ENCODE measurements at regions of chr22 and their contacts with region 1.

Region 1: DNA sequence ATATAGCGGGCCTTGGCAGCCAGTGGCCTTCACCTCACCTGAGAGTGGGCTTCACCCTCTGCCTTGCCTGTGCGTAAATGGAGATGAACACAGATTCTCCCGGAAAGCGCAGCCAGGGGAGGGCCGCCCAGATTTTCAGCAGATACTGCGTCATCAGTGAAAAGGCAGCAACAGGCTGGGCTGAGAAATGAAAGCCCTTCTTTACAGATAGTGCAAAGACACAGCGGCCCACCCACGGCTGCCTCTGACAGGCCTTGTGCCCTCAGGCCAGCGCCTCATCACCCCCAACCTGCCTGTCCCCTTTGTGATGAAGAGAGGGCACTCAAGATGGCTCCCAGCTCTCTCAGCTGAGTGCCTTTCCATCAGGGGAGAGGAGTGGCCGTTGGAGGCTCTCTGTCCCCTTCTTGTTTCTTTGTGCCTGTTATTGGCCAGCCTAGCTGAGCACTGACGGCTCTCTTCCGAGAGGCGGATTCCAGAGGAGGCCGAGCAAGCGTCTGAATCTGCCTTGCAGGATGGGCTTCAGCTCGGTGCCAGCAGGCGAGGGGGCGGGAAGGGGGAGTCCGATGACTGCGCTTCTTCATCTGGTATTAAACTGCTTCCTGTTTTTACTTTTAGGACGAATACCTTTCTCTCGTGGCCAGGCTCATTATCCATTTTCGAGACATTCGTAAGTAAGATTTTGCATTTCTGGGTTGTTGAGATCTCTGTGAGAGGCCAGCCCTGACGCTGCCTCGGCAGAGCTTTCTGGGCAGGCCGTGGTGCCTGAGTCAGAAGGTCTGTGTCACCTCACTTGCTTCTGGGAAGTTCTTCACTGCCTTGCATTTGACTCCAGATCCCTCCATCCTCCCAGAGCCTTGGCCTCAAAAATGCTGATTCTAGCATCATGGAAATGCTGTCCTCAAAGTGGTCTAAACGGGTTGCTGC is 43.7 kb downstream of the MED15 start:
- DNase-seq: peak; percentile 78
- ATAC-seq: peak; percentile 33
- H3K4me3 ChIP-seq: no peak overlapping the region
- H3K27ac ChIP-seq: peak overlapping the region; percentile 85
- H3K4me1 ChIP-seq: peaks cover 51% of the 10 kb centered on the region
- H3K27me3 ChIP-seq: no peaks in the 10 kb centered on the region
- CTCF ChIP-seq: no peak
- POLR2A ChIP-seq: no peak
- RAD21 ChIP-seq: no peak

Region 2: DNA sequence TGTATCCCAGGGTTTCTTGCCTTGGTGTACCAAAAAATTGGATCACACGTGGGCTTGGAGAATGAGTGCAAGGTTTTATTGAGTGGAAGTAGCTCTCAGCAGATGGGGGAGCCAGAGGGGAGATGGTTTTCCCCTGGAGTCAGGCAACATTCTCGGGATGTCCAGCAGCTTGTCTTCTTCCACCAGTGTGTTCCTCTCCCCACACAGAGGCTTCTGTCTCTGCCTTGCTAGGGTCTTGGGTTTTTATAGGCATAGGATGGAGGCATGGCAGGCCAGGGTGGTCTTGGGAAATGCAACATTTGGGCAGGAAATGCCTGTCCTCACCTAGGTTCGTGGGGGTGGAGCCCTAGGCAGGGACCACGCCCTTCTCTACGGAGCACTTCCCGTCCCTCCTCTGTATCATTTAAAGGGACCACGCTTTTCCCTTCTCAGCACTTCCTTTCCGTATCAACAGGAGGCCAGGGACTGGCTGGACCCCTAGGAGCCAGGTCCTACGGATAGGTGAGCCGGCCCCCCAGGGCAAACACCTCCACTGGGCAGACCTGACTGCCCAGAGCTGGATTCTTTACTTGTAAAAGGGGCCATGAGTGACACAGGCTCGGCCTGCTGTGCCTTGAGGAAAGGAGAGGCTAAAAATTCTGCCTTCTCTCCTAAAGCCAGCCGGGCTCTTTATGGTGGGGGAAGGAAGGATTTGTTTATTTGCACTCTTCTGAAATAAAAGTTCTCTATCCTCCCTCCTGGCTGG is 344.9 kb before region 1 on chr22:
- CTCF ChIA-PET with region 1: no interaction called
- POLR2A ChIA-PET with region 1: no interaction called
- dilution Hi-C with region 1: no loop called
- in situ Hi-C with region 1: no loop called
- intact Hi-C with region 1: no loop called
- DNase-seq: peak; percentile 63
- ATAC-seq: peak; percentile 93
- H3K4me3 ChIP-seq: peak overlapping the region; percentile 79
- H3K27ac ChIP-seq: peak overlapping the region; percentile 91
- H3K4me1 ChIP-seq: peaks cover 20% of the 10 kb centered on the region
- H3K27me3 ChIP-seq: peaks cover 5% of the 10 kb centered on the region; the same call in 1 of the 2 replicates
- CTCF ChIP-seq: no peak
- POLR2A ChIP-seq: 0 out of 2 replicates have a peak, but pooled peaks have one; percentile 32
- RAD21 ChIP-seq: no peak

Region 3: GRCh38 chr22:20507253-20508066 is 43.6 kb before region 1 on chr22 and contains the start of gene MED15:
- CTCF ChIA-PET with region 1: no interaction called
- POLR2A ChIA-PET with region 1: no interaction called
- dilution Hi-C with region 1: no loop called
- in situ Hi-C with region 1: loop called (anchors 5 kb)
- intact Hi-C with region 1: loop called (anchors 5 kb)
- DNase-seq: peak; percentile 89
- ATAC-seq: peak; percentile 73
- H3K4me3 ChIP-seq: peak within 1 kb of the TSS; percentile 78
- H3K27ac ChIP-seq: peak within 1 kb of the TSS; percentile 97
- H3K4me1 ChIP-seq: peaks cover 18% of the 10 kb centered on the region
- H3K27me3 ChIP-seq: no peaks in the 10 kb centered on the region
- CTCF ChIP-seq: no peak
- POLR2A ChIP-seq: peak; percentile 95
- RAD21 ChIP-seq: 0 out of 2 replicates have a peak, but pooled peaks have one; percentile 26
- total RNA-seq, gene MED15: 19.0 and 22.8 TPM in 2 replicates